Head of caudate nucleus (tissue), 42 donors: ENCODE measurements at regions of chr12 and their contacts with region 1.

Region 1: GRCh38 chr12:101407436-101408345 is at the start of gene ARL1:
- DNase-seq: peak; percentile 70 to 95 (median 89)

Region 2: DNA sequence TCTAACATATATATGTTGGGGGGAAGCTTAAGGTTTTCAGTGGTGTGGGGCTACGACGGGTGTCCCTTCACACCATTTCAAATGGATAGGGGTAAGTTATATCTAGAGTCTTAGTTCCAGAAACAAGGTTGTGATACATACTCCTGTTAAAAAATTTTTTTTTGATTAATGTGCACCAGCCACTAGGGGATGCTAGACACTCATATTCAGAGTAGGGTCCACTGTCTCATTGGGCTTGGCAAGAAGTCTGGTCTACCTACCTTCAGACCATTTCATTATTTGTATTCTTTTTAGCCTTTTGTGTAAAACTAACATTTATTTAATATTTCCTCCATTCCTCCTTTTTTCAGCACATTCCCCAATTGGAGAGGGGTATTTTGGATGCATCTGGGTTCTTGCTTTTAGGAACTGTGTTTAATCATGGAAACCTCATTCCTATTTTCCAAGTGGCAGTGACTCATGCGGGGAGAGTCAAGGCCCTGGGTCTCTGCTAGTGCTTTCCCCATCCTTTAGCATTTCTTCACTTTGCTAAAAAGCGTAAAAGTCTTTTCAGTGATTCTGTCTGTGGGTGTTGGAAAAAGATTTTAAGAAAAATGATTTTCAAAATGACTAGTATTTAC is 579.7 kb before region 1 on chr12:
- intact Hi-C with region 1: loop called (anchors 10 kb)
- DNase-seq: peak in 14 of 42 donors; percentile 8 to 56 (median 26)